GM18951 (cell line): ENCODE measurements at regions of chr3 and their contacts with region 1.

Region 1: GRCh38 chr3:27681245-27681748 is 40.8 kb downstream of the EOMES start:
- POLR2A ChIP-seq: no peak

Region 2: GRCh38 chr3:27134165-27134796 is 547.0 kb before region 1 on chr3:
- in situ Hi-C with region 1: loop called (anchors 25 kb)
- POLR2A ChIP-seq: no peak

Region 3: GRCh38 chr3:27307566-27307965 is 373.7 kb before region 1 on chr3:
- in situ Hi-C with region 1: loop called (anchors 10 kb)
- POLR2A ChIP-seq: no peak

Region 4: GRCh38 chr3:27800261-27800660 is 119.0 kb after region 1 on chr3:
- in situ Hi-C with region 1: no loop called
- POLR2A ChIP-seq: no peak